T-cell (primary cell): ENCODE measurements at regions of chr3 and their contacts with region 1.

Region 1: DNA sequence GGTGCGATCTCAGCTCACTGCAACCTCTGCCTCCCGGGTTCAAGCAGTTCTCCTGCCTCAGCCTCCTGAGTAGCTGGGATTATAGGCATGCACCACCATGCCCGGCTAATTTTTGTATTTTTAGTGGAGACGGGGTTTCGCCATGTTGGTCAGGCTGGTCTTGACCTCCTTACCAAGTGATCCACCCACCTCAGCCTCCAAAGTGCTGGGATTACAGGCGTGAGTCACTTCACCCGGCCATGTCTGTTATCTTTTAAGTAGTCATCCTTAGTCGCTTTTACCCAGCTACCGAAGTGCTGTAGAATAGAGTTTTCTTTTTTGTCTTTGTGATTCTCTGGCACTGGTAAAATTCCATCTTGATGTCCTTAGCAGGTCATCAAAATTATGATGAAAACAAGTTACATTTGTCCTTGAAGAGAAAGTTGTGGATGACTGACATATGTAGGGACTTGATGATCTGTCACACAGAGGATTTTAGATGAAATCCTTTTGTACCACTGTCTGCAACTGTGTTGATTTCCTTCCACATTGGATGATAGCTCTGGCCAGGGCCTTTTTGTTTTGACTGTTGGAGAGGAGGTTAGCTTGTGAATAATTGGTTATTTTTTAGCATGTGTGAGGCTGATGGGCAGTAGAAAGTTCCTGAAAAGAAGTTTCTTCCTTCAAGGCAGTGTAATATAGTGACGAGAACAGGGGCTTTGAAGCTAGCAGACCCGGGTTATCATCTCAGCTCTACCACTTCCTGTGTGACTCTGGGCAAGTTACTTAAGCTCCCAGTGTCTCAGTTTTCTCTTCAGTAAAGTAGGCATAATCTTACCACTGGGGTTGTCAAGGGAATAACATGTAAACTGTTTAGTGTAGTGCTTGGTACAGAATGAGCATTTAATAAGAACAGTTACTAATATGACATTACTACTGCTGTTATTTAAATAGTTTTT is 18.8 kb downstream of the ATG7 start:
- DNase-seq: peak in 30 of 35 experiments; percentile 5 to 73 (median 29)
- ATAC-seq: peak; percentile 91 to 97 (median 94)
- H3K4me3 ChIP-seq: no peak overlapping the region
- H3K4me3 Mint-ChIP-seq: peak overlapping the region; percentile 35 to 54 (median 53)
- H3K27ac ChIP-seq: peak overlapping the region; percentile 87
- H3K27ac Mint-ChIP-seq: peak overlapping the region; percentile 95 to 96
- H3K4me1 ChIP-seq: peaks cover 33 to 44% of the 10 kb centered on the region in 2 experiments
- H3K4me1 Mint-ChIP-seq: peaks cover 56 to 57% (median 56%) of the 10 kb centered on the region in 3 donors
- H3K27me3 ChIP-seq: no peaks in the 10 kb centered on the region
- H3K27me3 Mint-ChIP-seq: no peaks in the 10 kb centered on the region

Region 2: GRCh38 chr3:11230125-11230524 is 60.9 kb before region 1 on chr3:
- CTCF ChIA-PET with region 1: no interaction called
- POLR2A ChIA-PET with region 1: no interaction called
- DNase-seq: no peak
- ATAC-seq: no peak
- H3K4me3 ChIP-seq: no peak overlapping the region
- H3K4me3 Mint-ChIP-seq: no peak overlapping the region
- H3K27ac ChIP-seq: no peak overlapping the region
- H3K27ac Mint-ChIP-seq: no peak overlapping the region
- H3K4me1 ChIP-seq: no peaks in the 10 kb centered on the region
- H3K4me1 Mint-ChIP-seq: peaks cover 0 to 7% (median 6%) of the 10 kb centered on the region in 3 donors
- H3K27me3 ChIP-seq: peaks cover 0 to under 1% of the 10 kb centered on the region in 2 experiments
- H3K27me3 Mint-ChIP-seq: peaks cover 3 to 8% of the 10 kb centered on the region in 2 donors

Region 3: DNA sequence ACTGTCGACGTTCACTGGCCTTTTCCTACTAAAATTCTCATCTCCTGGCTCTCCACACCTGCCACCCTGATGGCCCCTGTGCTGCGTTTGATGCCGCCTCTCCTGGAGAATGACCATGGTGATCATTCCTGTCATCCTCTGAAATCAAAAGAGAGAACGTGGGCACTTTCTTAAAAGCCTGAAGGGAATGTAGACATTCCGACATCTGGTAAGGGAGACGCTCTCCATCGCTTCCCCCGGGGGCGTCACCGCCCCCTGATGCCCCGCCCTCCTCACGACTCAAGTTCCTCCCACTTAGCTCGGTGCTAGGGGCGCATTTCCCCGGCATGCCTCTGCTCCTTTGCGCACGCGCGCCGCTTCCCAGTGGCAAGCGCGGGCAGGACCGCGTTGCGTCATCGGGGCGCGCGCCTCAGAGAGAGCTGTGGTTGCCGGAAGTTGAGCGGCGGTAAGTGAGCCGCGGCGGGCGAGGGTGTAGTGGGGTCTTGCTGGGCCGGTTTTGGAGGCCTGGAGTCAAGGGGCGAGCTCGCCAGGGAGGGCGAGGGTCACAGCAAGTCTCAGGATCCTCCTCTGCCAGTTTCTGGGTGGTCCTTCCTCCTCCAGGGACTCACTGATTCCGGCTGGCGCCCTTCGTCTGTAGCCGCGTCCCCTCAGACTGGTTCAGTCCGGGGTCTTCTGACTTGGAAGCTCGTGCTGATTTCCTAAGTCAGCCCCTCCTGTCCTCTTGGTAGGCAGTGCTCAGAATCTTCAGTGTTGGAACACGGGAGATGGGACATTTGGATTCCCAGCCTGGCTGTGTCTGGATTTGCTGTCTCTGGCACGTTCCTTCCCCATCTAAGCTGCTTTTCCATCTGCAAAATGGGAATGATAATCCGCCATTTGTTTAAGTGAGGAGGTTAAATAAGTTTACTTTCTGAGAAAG is 18.8 kb before region 1 on chr3 and contains the start of gene ATG7:
- CTCF ChIA-PET with region 1: interaction called, 5 to 10 read pairs
- POLR2A ChIA-PET with region 1: interaction called, 6 to 16 read pairs
- DNase-seq: peak; percentile 93 to 98 (median 95)
- ATAC-seq: peak; percentile 96 to 98 (median 97)
- H3K4me3 ChIP-seq: peak within 1 kb of the TSS; percentile 69 to 96
- H3K4me3 Mint-ChIP-seq: peak within 1 kb of the TSS; percentile 92 to 95 (median 94)
- H3K27ac ChIP-seq: peak within 1 kb of the TSS; percentile 75
- H3K27ac Mint-ChIP-seq: peak within 1 kb of the TSS; percentile 93 to 97
- H3K4me1 ChIP-seq: peaks cover 10 to 19% of the 10 kb centered on the region in 2 experiments
- H3K4me1 Mint-ChIP-seq: peaks cover 48 to 51% (median 50%) of the 10 kb centered on the region in 3 donors
- H3K27me3 ChIP-seq: no peaks in the 10 kb centered on the region
- H3K27me3 Mint-ChIP-seq: no peaks in the 10 kb centered on the region
- total RNA-seq, gene ATG7: 29.0 to 39.3 (median 37.4) TPM

Region 4: GRCh38 chr3:11306817-11307589 is 16.0 kb after region 1 on chr3:
- CTCF ChIA-PET with region 1: interaction called in 1 of 2 experiments, 6 read pairs
- POLR2A ChIA-PET with region 1: interaction called in 1 of 2 experiments, 10 read pairs
- DNase-seq: peak in 12 of 35 experiments; percentile 1 to 51 (median 14)
- ATAC-seq: peak; percentile 66 to 93 (median 82)
- H3K4me3 ChIP-seq: no peak overlapping the region
- H3K4me3 Mint-ChIP-seq: no peak overlapping the region
- H3K27ac ChIP-seq: peak overlapping the region; percentile 37
- H3K27ac Mint-ChIP-seq: peak overlapping the region; percentile 84 to 86
- H3K4me1 ChIP-seq: peaks cover 0 to 13% of the 10 kb centered on the region in 2 experiments
- H3K4me1 Mint-ChIP-seq: peaks cover 0 to 26% (median 21%) of the 10 kb centered on the region in 3 donors
- H3K27me3 ChIP-seq: no peaks in the 10 kb centered on the region
- H3K27me3 Mint-ChIP-seq: no peaks in the 10 kb centered on the region